MCF 10A (cell line): ENCODE measurements at regions of chr2 and their contacts with region 1.

Region 1: GRCh38 chr2:226791487-226792081 is 8.0 kb downstream of the IRS1 start:
- DNase-seq: peak; percentile 88
- H3K4me3 Mint-ChIP-seq: peak overlapping the region; percentile 73
- H3K27ac Mint-ChIP-seq: peak overlapping the region; percentile 98
- H3K4me1 Mint-ChIP-seq: peaks cover 31% of the 10 kb centered on the region
- H3K27me3 Mint-ChIP-seq: no peaks in the 10 kb centered on the region
- CTCF ChIP-seq: peak; percentile 26

Region 2: GRCh38 chr2:225889446-225889850 is 902.1 kb before region 1 on chr2:
- CTCF ChIA-PET with region 1: interaction called, 18 read pairs
- POLR2A ChIA-PET with region 1: interaction called, 7 read pairs
- intact Hi-C with region 1: loop called (anchors 1 kb)
- DNase-seq: peak; percentile 70
- H3K4me3 Mint-ChIP-seq: no peak overlapping the region
- H3K27ac Mint-ChIP-seq: no peak overlapping the region
- H3K4me1 Mint-ChIP-seq: peaks cover 2% of the 10 kb centered on the region
- H3K27me3 Mint-ChIP-seq: no peaks in the 10 kb centered on the region
- CTCF ChIP-seq: peak; percentile 77

Region 3: DNA sequence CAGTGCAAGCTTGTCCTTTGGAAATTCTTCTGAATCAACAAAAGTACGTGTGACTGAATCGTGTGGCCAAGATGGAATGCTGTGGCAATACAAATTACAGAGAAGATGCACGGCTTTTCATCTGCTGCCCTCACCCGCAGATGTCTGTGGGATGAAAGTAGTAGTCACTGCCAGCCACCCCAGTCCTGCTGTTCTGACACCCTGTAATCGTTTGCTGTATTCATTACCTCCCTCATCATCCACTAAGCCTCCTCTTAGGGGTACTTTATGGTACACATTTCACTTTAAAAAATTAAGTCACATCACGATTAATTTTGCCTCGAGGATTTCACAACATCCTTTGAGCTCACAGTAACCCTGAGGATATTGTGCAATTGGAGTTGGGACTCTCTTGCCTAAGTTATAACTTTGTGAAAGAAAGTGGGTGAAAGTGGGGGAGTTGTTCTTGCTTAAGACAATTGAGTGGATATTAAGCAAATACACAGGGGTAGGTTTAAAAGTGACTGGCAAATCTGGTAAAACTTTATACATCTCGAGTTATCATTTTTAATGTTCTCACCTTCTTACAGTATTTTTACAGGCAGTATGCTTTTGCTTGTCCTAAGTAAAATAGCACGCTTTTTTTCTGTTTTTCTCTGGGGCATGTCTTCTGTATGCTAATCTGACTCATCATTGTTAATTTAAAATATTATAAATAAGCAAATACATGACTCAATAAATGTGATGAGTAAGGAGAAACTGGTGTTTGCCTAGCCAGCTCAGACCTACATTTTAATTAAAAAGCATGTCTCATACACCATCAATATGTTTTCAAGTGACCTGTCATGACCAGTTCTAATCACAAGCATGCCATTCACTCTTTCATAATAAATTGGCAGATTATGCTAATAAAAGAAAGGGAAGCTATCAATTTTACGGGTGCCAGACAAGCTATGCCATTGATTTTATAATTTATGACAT is 672.8 kb before region 1 on chr2:
- CTCF ChIA-PET with region 1: interaction called, 3 read pairs
- POLR2A ChIA-PET with region 1: interaction called, 94 read pairs
- intact Hi-C with region 1: loop called (anchors 1 kb)
- DNase-seq: peak; percentile 94
- H3K4me3 Mint-ChIP-seq: peak overlapping the region; percentile 63
- H3K27ac Mint-ChIP-seq: peak overlapping the region; percentile 65
- H3K4me1 Mint-ChIP-seq: peaks cover 59% of the 10 kb centered on the region
- H3K27me3 Mint-ChIP-seq: no peaks in the 10 kb centered on the region
- CTCF ChIP-seq: no peak

Region 4: DNA sequence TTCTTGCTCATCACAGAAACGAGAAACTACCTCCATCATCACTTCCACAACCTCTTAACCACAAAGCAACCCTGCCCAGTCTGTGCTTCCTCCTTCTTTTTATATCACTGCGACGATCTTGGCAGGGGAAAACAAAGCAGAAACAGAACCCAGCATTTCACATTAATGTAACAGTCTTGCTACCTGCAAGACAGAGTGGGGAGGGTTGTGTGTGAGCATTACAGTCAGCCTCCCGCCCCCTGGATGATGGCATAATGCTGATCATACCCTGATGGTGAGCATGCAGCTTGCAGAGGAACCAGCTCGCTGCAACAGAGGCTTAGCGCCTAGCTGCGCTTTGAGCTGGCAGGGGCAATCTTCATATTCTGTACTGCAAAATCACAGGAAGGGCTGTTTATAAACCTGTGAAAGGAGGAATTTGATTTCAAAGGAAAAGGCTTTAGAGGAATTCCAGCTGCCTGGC is 368.1 kb before region 1 on chr2:
- CTCF ChIA-PET with region 1: interaction called, 4 read pairs
- POLR2A ChIA-PET with region 1: no interaction called
- intact Hi-C with region 1: loop called (anchors 2 kb)
- DNase-seq: no peak
- H3K4me3 Mint-ChIP-seq: no peak overlapping the region
- H3K27ac Mint-ChIP-seq: no peak overlapping the region
- H3K4me1 Mint-ChIP-seq: peaks cover 26% of the 10 kb centered on the region
- H3K27me3 Mint-ChIP-seq: no peaks in the 10 kb centered on the region
- CTCF ChIP-seq: no peak

Region 5: DNA sequence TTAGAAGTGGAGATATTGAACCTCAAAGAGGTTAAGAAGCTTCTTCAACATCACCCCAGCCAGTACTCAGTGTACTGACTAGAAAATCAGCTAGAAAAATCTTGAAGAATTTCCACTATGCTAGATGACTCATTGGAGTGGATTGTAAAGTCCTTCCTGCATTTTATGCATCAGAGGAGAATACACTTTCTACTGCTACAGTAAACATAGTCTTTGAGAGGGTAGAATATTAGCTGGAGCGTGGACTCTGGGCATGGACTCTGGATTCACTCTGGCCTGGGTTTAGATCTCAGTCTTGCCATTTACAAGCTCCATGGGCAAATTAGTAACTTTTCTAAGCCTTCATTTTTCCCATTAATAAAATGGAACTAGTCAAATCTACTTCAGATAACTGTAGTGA is 207.9 kb before region 1 on chr2:
- CTCF ChIA-PET with region 1: no interaction called
- POLR2A ChIA-PET with region 1: no interaction called
- intact Hi-C with region 1: loop called (anchors 10 kb)
- DNase-seq: peak; percentile 56
- H3K4me3 Mint-ChIP-seq: no peak overlapping the region
- H3K27ac Mint-ChIP-seq: peak overlapping the region; percentile 10
- H3K4me1 Mint-ChIP-seq: peaks cover 16% of the 10 kb centered on the region
- H3K27me3 Mint-ChIP-seq: no peaks in the 10 kb centered on the region
- CTCF ChIP-seq: no peak

Region 6: DNA sequence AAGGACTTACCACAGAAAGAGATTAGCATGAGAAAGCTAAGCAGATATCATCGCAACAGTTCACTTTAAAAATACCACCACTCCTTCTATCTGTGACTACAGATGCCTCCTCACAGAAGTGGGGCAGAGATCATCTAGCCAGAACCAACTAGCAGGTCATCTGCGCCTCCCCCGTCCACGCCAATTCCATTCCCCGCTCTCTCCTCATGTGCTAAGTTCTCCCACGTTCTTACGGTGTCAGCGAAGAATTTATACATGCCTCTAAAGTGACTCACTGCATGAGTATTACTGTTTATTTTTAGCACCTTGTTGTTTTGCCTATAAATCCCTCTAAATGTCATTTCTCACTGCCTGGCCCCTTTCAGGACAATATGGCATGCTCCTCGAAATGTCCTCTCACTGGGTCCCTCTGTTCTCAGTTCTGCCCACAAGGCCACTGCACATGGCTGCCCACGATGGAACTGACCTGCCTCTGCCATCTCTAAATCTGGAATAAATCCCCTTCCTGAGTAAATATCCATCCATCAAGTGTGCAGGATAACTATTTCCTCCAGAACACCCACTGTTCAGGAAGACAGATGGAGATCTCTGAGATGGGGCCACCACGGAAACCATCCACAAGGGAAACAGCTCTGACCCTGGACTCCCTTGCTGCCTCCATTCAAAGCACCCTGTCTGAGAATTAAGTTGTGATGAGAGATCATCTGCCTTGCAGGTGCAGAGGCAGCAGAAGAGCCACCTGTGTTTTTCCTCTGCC is 129.6 kb before region 1 on chr2:
- CTCF ChIA-PET with region 1: no interaction called
- POLR2A ChIA-PET with region 1: interaction called, 10 read pairs
- intact Hi-C with region 1: no loop called
- DNase-seq: peak; percentile 94
- H3K4me3 Mint-ChIP-seq: peak overlapping the region; percentile 17
- H3K27ac Mint-ChIP-seq: peak overlapping the region; percentile 25
- H3K4me1 Mint-ChIP-seq: peaks cover 44% of the 10 kb centered on the region
- H3K27me3 Mint-ChIP-seq: no peaks in the 10 kb centered on the region
- CTCF ChIP-seq: no peak

Region 7: DNA sequence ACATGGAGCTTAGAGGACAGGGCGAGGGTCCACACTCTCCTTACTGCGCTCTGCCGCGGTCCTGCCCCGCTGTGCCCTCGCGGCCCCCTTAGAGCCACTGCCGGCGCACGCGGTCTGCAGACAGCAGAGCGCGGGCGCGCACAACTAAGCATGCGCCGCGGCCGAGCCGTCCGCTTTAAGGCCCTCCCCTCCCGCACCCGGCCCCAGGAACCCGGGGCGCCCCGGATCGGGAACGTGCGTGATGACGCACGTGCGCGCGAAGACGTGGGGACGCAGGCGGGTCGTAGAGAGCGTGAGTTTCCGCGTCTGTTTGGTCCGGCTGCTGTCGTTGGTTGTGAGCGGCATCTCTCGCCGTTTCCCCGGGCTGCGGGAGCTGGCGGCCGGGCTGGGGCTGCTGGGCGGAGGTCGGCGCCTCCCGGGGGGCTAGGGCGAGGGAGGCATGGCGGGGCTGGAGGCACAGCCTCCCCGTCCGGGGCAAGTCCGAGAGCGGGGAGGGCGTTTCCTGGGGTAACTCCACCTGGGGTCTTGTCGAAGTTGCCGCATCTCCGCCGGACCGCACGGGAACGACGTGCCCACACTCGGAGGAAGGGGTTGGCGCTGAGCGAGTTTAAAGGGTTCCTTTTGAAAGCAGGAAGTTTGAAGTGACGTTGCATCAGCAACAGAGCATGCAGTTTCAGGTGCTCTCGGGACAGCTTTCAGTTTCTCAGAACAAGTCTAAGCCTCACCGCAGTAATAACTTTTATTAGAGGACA is 44.4 kb after region 1 on chr2 and contains the start of gene RHBDD1:
- CTCF ChIA-PET with region 1: interaction called, 5 read pairs
- POLR2A ChIA-PET with region 1: interaction called, 10 read pairs
- intact Hi-C with region 1: no loop called
- DNase-seq: peak; percentile 96
- H3K4me3 Mint-ChIP-seq: peak within 1 kb of the TSS; percentile 91
- H3K27ac Mint-ChIP-seq: peak within 1 kb of the TSS; percentile 98
- H3K4me1 Mint-ChIP-seq: peaks cover 11% of the 10 kb centered on the region
- H3K27me3 Mint-ChIP-seq: no peaks in the 10 kb centered on the region
- CTCF ChIP-seq: no peak
- total RNA-seq, gene RHBDD1: 75.2 and 76.0 TPM in 2 replicates